Right cardiac atrium (tissue), 5 donors: ENCODE measurements at regions of chr12 and their contacts with region 1.

Region 1: DNA sequence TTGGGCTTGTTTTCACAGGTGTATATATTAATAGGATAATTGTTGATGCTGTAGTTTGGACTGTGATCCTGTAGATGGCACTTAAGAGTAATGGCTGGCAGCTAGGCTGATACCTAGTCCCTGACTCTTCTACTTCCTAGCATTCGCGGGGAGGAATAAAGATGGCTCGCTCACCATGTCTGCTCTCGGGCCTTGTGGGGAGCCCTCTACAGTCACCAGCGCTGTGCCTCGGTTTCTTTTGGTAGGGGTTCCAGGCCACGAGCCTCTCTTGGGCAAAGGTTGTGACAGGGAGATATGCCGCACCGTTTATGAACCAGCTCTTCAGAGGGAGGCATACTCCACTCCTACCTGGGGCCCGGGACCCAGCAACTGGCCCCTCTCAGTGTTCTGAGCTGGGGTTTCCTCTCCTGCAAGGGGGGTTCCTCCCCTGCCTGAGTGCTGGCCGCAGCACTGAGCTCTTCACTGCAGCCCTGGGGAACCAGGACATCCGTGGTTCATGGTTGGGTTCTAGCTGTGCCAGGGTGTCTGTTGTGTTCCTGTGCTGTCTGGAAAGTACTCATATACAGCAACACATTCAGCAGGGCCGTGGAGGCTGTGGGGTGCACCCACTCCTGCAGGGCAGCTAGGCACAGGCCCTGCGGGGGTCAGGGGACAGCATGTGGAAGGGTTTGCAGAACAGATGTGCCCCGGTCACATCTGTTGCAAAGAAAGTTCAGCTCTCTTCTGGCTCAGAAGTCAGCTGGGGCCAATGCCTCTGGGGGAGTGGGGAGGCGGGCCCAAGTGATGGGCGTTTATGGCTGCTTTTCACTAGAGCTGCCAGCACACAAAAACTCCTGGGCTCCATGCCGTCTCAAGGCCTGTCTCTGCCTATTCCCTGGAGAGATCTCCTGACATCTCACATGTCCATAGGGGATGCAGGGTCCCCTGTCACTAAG is 147.9 kb downstream of the PPFIA2 start:
- DNase-seq: peak in 1 of 3 donors; percentile 18
- ATAC-seq: peak in 1 of 2 donors; percentile 23
- H3K4me3 ChIP-seq: no peak overlapping the region
- H3K27ac ChIP-seq: no peak overlapping the region
- H3K4me1 ChIP-seq: no peaks in the 10 kb centered on the region
- H3K27me3 ChIP-seq: no peaks in the 10 kb centered on the region

Region 2: GRCh38 chr12:81468206-81468605 is 143.0 kb before region 1 on chr12:
- intact Hi-C with region 1: loop called in 1 of 4 experiments (anchors 10 kb)
- DNase-seq: no peak
- ATAC-seq: no peak
- H3K4me3 ChIP-seq: no peak overlapping the region
- H3K27ac ChIP-seq: no peak overlapping the region
- H3K4me1 ChIP-seq: peaks cover 1% of the 10 kb centered on the region
- H3K27me3 ChIP-seq: no peaks in the 10 kb centered on the region